CD8-positive, alpha-beta T cell (primary cell): ENCODE measurements at regions of chr7 and their contacts with region 1.

Region 1: DNA sequence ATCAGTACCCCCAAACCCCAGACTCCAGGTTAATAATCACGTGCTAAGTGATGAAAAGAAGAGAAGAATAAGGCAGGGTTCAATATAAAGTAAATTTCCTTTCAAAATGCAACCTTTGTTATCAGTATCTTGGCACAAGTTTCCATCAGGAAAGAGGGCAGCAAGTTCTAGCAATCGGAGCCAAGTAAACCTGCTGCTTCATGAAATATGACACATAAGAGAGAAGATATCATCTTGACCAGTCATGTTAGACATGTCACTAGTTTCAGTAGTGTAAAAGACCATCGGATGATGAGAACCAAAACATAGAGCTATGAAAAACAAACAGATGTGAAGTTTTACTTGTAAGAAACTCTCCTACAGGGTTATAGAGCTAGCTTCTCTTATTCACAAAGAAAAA is 44.0 kb downstream of the AASS start:
- DNase-seq: no peak
- ATAC-seq: no peak
- H3K4me3 ChIP-seq: no peak overlapping the region
- H3K4me3 Mint-ChIP-seq: no peak overlapping the region
- H3K27ac ChIP-seq: no peak overlapping the region
- H3K27ac Mint-ChIP-seq: no peak overlapping the region
- H3K4me1 ChIP-seq: no peaks in the 10 kb centered on the region
- H3K4me1 Mint-ChIP-seq: no peaks in the 10 kb centered on the region
- H3K27me3 ChIP-seq: no peaks in the 10 kb centered on the region
- H3K27me3 Mint-ChIP-seq: no peaks in the 10 kb centered on the region
- CTCF ChIP-seq: no peak

Region 2: GRCh38 chr7:122055072-122055471 is 44.9 kb before region 1 on chr7:
- CTCF ChIA-PET with region 1: no interaction called
- POLR2A ChIA-PET with region 1: no interaction called
- intact Hi-C with region 1: loop called in 1 of 2 experiments (anchors 1 kb)
- DNase-seq: no peak
- ATAC-seq: no peak
- H3K4me3 ChIP-seq: no peak overlapping the region
- H3K4me3 Mint-ChIP-seq: no peak overlapping the region
- H3K27ac ChIP-seq: no peak overlapping the region
- H3K27ac Mint-ChIP-seq: no peak overlapping the region
- H3K4me1 ChIP-seq: no peaks in the 10 kb centered on the region
- H3K4me1 Mint-ChIP-seq: no peaks in the 10 kb centered on the region
- H3K27me3 ChIP-seq: no peaks in the 10 kb centered on the region
- H3K27me3 Mint-ChIP-seq: no peaks in the 10 kb centered on the region
- CTCF ChIP-seq: no peak

Region 3: GRCh38 chr7:122132341-122132740 is 32.3 kb after region 1 on chr7:
- CTCF ChIA-PET with region 1: no interaction called
- POLR2A ChIA-PET with region 1: no interaction called
- intact Hi-C with region 1: no loop called
- DNase-seq: no peak
- ATAC-seq: no peak
- H3K4me3 ChIP-seq: no peak overlapping the region
- H3K4me3 Mint-ChIP-seq: no peak overlapping the region
- H3K27ac ChIP-seq: no peak overlapping the region
- H3K27ac Mint-ChIP-seq: no peak overlapping the region
- H3K4me1 ChIP-seq: peaks cover 3% of the 10 kb centered on the region
- H3K4me1 Mint-ChIP-seq: peaks cover 11% of the 10 kb centered on the region
- H3K27me3 ChIP-seq: no peaks in the 10 kb centered on the region
- H3K27me3 Mint-ChIP-seq: no peaks in the 10 kb centered on the region
- CTCF ChIP-seq: no peak